ENCODE measurements at regions of chr15 and their contacts with region 1.

Region 1: DNA sequence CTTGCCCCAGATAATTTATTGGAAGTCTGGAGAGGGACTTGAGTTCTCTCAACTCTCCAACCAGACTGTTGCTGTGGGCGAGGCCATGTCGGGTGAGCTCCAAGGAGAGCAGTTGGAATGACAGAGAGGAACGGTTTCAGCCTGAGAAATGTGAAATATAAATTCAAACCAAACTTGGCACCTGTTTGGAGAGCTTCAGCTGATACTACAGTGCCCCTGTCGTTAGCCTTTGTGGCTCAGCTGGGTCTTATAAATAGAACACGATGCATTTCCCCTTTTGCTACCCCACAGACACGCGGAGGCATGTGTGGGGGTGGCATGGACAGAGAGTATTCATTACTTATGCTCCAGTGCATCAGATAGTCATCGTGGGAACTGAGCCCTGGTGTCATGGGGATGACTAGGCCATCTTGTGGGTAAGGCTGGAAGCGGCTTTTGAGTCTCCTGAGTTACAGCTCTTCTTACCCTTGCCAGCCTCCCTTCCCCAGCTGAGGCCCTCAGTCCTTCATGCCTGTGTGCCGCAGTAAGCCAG is 15.6 kb downstream of the SMAD3 start:
- DNase-seq: peak; percentile 69
- ATAC-seq: peak; percentile 70
- H3K4me3 Mint-ChIP-seq: peak overlapping the region; percentile 76
- H3K27ac Mint-ChIP-seq: peak overlapping the region; percentile 95
- H3K4me1 Mint-ChIP-seq: peaks cover 99% of the 10 kb centered on the region
- H3K27me3 Mint-ChIP-seq: no peaks in the 10 kb centered on the region
- CTCF ChIP-seq: no peak

Region 2: GRCh38 chr15:66946578-66947164 is 134.3 kb before region 1 on chr15:
- CTCF ChIA-PET with region 1: interaction called, 28 read pairs
- POLR2A ChIA-PET with region 1: interaction called, 21 read pairs
- intact Hi-C with region 1: loop called (anchors 1 kb)
- DNase-seq: peak; percentile 69
- ATAC-seq: peak; percentile 93
- H3K4me3 Mint-ChIP-seq: peak overlapping the region; percentile 17
- H3K27ac Mint-ChIP-seq: no peak overlapping the region
- H3K4me1 Mint-ChIP-seq: peaks cover 10% of the 10 kb centered on the region
- H3K27me3 Mint-ChIP-seq: peaks cover 9% of the 10 kb centered on the region
- CTCF ChIP-seq: no peak

Region 3: GRCh38 chr15:67013696-67014095 is 67.3 kb before region 1 on chr15:
- CTCF ChIA-PET with region 1: no interaction called
- POLR2A ChIA-PET with region 1: no interaction called
- intact Hi-C with region 1: no loop called
- DNase-seq: no peak
- ATAC-seq: no peak
- H3K4me3 Mint-ChIP-seq: no peak overlapping the region
- H3K27ac Mint-ChIP-seq: no peak overlapping the region
- H3K4me1 Mint-ChIP-seq: peaks cover 3% of the 10 kb centered on the region
- H3K27me3 Mint-ChIP-seq: no peaks in the 10 kb centered on the region
- CTCF ChIP-seq: no peak

Region 4: GRCh38 chr15:67065444-67066093 is 15.4 kb before region 1 on chr15 and contains the start of gene SMAD3:
- CTCF ChIA-PET with region 1: interaction called, 63 read pairs
- POLR2A ChIA-PET with region 1: interaction called, 427 read pairs
- intact Hi-C with region 1: loop called (anchors 1 kb)
- DNase-seq: peak; percentile 74
- ATAC-seq: peak; percentile 71
- H3K4me3 Mint-ChIP-seq: peak within 1 kb of the TSS; percentile 98
- H3K27ac Mint-ChIP-seq: peak within 1 kb of the TSS; percentile 95
- H3K4me1 Mint-ChIP-seq: peaks cover 47% of the 10 kb centered on the region
- H3K27me3 Mint-ChIP-seq: no peaks in the 10 kb centered on the region
- CTCF ChIP-seq: no peak
- total RNA-seq, gene SMAD3: 85.9 and 118 TPM in 2 replicates

Region 5: DNA sequence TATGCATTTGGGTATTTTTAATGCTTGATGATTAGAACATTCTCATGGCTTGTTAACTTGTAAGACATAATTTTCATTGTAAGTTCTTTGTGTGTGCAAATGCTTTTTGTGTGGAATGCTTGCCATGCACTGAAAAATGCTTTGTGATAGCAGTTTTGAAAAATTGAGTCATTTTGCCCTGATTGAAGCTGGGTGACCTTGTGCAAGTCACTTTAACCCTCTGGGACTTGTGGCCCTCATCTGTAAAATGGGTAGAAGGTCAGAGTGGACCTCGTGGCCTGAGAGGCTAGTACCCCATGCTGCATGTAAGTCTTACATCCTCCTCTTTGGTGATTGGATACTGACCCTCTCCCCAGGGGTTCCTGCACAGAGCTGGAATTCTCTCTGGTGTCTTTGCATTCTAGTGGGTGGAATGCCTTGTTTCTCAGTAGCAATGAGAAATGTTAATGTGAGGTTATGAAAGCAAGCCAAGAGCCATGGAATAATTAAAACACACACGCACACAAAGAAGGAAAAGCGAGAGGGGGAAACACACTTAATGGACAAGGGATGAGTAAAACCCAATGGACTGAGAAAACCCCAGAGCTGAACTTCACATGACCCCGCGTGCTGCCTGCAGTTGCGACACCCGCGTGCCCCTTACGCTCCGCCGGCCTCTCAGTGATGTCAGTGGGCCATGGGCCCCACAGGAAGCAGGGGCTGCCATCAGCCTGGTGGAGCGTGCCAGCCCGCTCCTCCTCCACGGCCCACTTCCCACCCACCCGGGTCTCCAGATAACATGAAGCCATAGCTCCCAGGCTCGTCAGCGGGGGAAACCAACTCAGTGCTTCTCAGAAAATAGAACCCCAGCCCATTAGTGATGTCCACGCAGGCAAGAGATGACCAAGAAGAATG is 28.4 kb after region 1 on chr15:
- CTCF ChIA-PET with region 1: interaction called, 10 read pairs
- POLR2A ChIA-PET with region 1: interaction called, 1,703 read pairs
- intact Hi-C with region 1: loop called (anchors 1 kb)
- DNase-seq: peak; percentile 76
- ATAC-seq: peak; percentile 83
- H3K4me3 Mint-ChIP-seq: peak overlapping the region; percentile 67
- H3K27ac Mint-ChIP-seq: peak overlapping the region; percentile 92
- H3K4me1 Mint-ChIP-seq: peaks cover 14% of the 10 kb centered on the region
- H3K27me3 Mint-ChIP-seq: no peaks in the 10 kb centered on the region
- CTCF ChIP-seq: no peak

Region 6: GRCh38 chr15:67181191-67181645 is 100.3 kb after region 1 on chr15:
- CTCF ChIA-PET with region 1: no interaction called
- POLR2A ChIA-PET with region 1: interaction called, 3 read pairs
- intact Hi-C with region 1: loop called (anchors 2 kb)
- DNase-seq: no peak
- ATAC-seq: peak; percentile 40
- H3K4me3 Mint-ChIP-seq: no peak overlapping the region
- H3K27ac Mint-ChIP-seq: no peak overlapping the region
- H3K4me1 Mint-ChIP-seq: peaks cover 15% of the 10 kb centered on the region
- H3K27me3 Mint-ChIP-seq: no peaks in the 10 kb centered on the region
- CTCF ChIP-seq: no peak

Region 7: GRCh38 chr15:67542420-67543347 is 461.7 kb after region 1 on chr15 and contains the start of gene MAP2K5:
- CTCF ChIA-PET with region 1: no interaction called
- POLR2A ChIA-PET with region 1: no interaction called
- intact Hi-C with region 1: loop called (anchors 10 kb)
- DNase-seq: peak; percentile 76
- ATAC-seq: peak; percentile 73
- H3K4me3 Mint-ChIP-seq: peak within 1 kb of the TSS; percentile 94
- H3K27ac Mint-ChIP-seq: peak within 1 kb of the TSS; percentile 94
- H3K4me1 Mint-ChIP-seq: peaks cover 56% of the 10 kb centered on the region
- H3K27me3 Mint-ChIP-seq: peaks cover 5% of the 10 kb centered on the region
- CTCF ChIP-seq: no peak
- total RNA-seq, gene MAP2K5: 18.9 and 26.7 TPM in 2 replicates